ENCODE measurements at regions of chr4 and their contacts with region 1.

Region 1: GRCh38 chr4:185183619-185184281 is 20.1 kb downstream of the CFAP97 start:
- DNase-seq: peak; percentile 32 to 96 (median 84)

Region 2: DNA sequence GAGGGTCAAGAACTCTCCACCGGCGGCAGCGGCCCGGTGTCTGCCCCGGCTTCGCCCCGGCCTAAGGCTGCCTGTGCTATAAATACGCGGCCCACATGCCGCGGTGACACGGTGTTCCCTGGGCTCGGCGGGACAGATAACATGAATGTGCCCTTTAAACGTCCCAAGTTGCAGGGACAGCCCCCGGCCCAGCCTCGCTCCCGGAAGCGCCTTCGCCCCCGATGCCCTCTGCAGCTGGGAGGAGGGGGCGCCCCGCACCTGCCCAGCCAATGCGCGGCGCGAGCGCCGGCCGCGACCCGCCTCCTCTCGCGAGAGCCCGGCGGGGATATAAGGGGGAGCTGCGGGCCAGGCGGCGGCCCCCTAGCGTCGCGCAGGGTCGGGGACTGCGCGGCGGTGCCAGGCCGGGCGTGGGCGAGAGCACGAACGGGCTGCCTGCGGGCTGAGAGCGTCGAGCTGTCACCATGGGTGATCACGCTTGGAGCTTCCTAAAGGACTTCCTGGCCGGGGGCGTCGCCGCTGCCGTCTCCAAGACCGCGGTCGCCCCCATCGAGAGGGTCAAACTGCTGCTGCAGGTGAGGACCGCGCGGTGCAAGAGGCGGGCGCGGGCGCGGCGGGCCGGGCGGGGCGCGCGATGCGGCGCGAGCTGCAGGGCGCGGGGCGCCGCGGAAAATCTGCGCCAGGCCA is 40.7 kb before region 1 on chr4 and contains the start of gene SLC25A4:
- intact Hi-C with region 1: loop called (anchors 5 kb)
- DNase-seq: peak; percentile 78 to 98 (median 94)

Measured in head of caudate nucleus (tissue), 42 donors.